Ovary (tissue), 10 donors: ENCODE measurements at regions of chr15 and their contacts with region 1.

Region 1: DNA sequence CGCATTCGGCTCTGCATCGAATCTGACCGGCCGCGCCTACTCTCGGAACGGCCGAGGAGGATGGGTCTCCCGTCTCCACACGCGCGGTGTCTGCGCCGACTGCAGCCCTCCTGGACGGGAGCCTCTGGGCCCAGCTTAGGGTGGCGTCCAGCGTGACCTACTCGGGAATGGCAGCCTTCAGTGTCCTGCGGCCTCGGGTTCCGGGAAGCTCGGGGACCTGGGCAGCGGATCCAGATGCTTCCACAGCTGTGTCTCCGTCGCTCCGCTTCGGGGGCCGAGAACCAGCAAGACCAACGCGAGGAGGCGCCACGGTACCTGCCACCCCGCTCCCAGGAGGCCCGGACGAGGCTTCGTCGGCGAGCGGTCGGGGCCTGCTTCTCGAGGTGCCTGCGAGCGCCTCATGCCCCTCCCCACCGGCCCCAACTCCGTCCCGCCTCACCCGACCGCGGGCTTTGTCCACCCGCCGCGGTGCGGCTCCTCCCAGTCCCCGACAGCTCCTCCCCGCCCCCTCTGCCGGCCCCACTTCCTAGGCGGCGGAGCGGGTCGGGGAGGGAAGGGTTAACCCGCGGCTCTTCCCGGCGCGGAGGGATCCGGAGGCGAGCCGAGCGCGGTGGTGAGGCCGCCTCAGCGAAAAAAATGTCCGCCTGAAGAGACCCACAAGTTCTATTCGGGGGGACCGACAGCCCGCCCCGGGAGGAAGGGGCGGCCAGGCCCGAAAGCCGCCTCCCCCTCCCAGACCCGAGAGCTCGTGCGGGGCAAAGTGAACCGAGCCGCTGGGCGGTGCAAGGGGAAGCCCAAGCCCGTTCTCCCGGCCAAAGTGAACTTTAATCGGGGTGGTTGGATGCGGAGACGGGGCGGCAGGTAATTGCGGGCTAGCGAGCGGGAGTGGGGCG is at the start of gene TCF12:
- DNase-seq: peak; percentile 95 to 97 (median 96)
- H3K4me3 ChIP-seq: peak within 1 kb of the TSS; percentile 96
- H3K27ac ChIP-seq: peak within 1 kb of the TSS; percentile 95 to 97
- H3K4me1 ChIP-seq: peaks cover 4% of the 10 kb centered on the region
- H3K27me3 ChIP-seq: no peaks in the 10 kb centered on the region
- CTCF ChIP-seq: peak in 1 of 3 donors; percentile 28
- EP300 ChIP-seq: no peak
- POLR2A ChIP-seq: peak; percentile 68
- total RNA-seq, gene TCF12: 102 to 150 (median 126) TPM

Region 2: DNA sequence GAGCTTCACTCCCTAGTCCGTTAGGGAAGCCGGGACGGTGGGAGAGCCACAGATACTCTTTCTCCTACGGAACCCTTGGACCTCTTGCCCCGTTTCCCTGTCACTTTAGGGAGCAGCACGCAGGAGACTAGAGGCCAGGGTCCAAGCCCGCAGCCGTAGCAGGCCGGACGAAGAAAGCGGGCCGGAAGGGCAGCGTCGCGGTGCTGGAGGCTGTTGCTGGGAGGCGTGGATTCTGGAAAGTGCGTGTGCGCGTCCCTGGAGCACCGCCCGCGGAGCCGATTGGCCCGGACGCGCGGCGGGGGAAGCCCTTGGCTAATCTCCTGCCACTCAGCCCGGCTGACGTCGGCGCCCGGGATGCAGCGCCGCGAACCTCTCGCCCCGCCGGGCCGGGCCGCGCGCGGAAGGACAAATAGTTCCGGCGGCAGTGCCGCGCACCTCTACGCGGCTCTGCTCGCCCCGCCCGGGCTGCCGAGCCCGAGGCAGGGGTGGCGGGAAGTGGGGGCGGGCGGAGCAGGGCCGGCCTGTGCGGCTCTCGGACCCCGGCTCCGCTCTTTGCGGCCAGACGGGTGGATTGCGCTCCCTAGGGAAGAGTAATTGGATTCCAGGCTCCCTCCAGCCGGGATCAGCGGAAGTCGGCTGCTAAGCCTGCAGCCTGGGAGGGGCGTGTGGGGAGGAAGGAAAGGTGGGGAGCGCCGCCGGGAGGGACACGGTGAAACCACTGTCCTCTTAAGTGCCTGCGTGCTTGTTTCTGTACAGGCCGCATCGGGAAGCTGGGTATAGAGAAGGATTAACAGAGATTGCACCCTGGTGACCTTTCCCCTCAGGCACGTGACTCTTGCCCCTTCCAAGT is 31.1 kb before region 1 on chr15:
- intact Hi-C with region 1: loop called in 3 of 4 experiments (anchors 1 to 2 kb)
- DNase-seq: peak; percentile 95 to 97 (median 96)
- H3K4me3 ChIP-seq: peak overlapping the region; percentile 47
- H3K27ac ChIP-seq: peak overlapping the region; percentile 93 to 96
- H3K4me1 ChIP-seq: peaks cover 2% of the 10 kb centered on the region
- H3K27me3 ChIP-seq: no peaks in the 10 kb centered on the region
- CTCF ChIP-seq: peak in 1 of 3 donors; percentile 16
- EP300 ChIP-seq: no peak
- POLR2A ChIP-seq: peak; percentile 87

Region 3: DNA sequence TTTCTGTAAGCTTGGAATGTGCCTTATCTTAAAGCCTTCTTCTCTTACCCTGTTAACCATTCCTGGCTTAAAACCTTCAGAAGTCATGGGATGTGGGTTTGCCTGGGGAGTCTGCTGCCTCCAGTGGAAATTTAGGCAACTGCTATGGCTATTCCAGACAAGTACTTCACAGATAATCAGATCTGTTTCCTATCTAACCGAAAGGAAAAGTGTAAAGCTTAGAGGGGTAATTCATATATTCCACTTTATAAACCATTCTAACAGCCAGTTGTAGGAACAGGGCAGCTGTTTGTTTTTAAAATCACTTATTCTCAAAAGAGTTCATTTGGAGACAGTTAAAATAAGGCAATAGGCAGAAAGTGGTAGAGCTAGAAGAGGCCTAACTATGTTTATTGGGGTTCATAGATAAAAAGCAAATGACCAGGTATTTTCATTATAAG is 220.1 kb after region 1 on chr15:
- intact Hi-C with region 1: loop called in 1 of 4 experiments (anchors 10 kb)
- DNase-seq: no peak
- H3K4me3 ChIP-seq: no peak overlapping the region
- H3K27ac ChIP-seq: no peak overlapping the region
- H3K4me1 ChIP-seq: peaks cover 2% of the 10 kb centered on the region
- H3K27me3 ChIP-seq: no peaks in the 10 kb centered on the region
- CTCF ChIP-seq: peak; percentile 26 to 46 (median 35)
- EP300 ChIP-seq: no peak
- POLR2A ChIP-seq: no peak

Region 4: DNA sequence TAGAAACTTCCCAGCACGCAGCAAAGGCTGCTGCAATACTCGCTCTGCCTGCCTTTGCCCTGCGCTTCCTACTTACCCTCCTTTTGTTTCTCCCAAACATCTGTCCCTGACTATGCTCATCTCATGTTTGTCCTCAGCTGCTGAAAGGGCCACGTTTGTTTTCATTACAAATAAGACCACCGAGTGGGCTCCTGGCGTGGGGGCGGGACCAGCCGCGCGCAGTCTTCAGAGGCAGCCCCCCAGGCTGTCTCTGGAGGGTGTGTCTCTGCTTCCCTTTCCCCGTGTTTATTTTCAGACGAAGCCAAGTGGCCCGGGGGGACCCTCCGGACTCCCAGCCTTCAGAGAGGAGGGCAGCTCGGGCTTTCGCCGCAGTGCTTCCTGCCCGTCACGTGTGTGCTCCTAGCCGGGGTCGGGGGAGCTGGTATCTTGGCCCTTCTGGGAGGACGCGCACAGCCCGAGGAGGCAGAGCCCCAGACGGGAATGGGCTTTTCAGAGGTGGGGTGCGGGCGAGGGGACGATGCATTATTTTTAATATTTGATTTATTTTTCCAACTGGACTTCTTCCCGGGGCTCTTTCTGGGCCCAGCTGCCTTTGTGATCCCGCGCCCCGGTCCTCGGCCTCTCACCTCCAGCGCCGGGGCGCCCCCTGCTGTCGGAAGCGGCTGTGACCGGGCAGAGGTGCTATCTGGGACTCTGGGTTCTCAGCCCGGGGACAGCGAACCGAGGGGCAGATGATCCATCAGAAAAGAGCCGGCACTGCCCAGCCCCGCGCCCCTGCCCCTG is 388.1 kb after region 1 on chr15:
- intact Hi-C with region 1: loop called in 1 of 4 experiments (anchors 10 kb)
- DNase-seq: peak; percentile 73 to 90 (median 85)
- H3K4me3 ChIP-seq: peak overlapping the region; percentile 39
- H3K27ac ChIP-seq: peak overlapping the region in 1 of 2 donors; percentile 5
- H3K4me1 ChIP-seq: peaks cover 1% of the 10 kb centered on the region
- H3K27me3 ChIP-seq: no peaks in the 10 kb centered on the region
- CTCF ChIP-seq: peak; percentile 60 to 76 (median 63)
- EP300 ChIP-seq: no peak
- POLR2A ChIP-seq: no peak

Region 5: DNA sequence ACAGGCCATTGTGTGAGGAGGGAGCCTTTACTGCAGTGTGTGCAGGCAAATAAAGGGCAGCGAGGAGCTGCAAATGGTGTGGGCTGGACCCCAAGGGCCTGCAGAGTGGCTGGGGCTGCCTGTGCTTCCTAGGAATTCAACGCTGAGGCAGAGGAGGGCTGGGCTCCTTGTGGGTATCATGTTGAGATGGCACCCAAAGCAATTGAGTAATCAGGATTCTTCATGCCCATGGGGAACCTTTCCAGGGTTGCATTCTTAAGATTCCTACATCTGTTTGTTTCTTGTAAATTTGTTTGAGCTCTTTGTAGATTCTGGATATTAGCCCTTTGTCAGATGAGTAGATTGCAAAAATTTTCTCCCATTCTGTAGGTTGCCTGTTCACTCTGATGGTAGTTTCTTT is 1428.1 kb after region 1 on chr15:
- intact Hi-C with region 1: no loop called
- DNase-seq: no peak
- H3K4me3 ChIP-seq: no peak overlapping the region
- H3K27ac ChIP-seq: no peak overlapping the region
- H3K4me1 ChIP-seq: no peaks in the 10 kb centered on the region
- H3K27me3 ChIP-seq: no peaks in the 10 kb centered on the region
- CTCF ChIP-seq: no peak
- EP300 ChIP-seq: no peak
- POLR2A ChIP-seq: no peak